Dorsolateral prefrontal cortex (tissue), 120 donors: ENCODE measurements at regions of chr3 and their contacts with region 1.

Region 1: GRCh38 chr3:170811928-170812591 is 57.9 kb downstream of the RPL22L1 start:
- DNase-seq: peak; percentile 32 to 84 (median 54)
- H3K4me3 ChIP-seq: no peak overlapping the region
- H3K27ac ChIP-seq: peak overlapping the region in 38 of 59 donors; percentile 1 to 71 (median 48)
- H3K27me3 ChIP-seq: no peaks in the 10 kb centered on the region
- CTCF ChIP-seq: peak; percentile 85 to 98 (median 94)

Region 2: GRCh38 chr3:170317954-170318353 is 494.1 kb before region 1 on chr3:
- intact Hi-C with region 1: loop called in 1 of 2 experiments (anchors 10 kb)
- DNase-seq: no peak
- H3K4me3 ChIP-seq: no peak overlapping the region
- H3K27ac ChIP-seq: no peak overlapping the region
- H3K27me3 ChIP-seq: no peaks in the 10 kb centered on the region
- CTCF ChIP-seq: no peak

Region 3: DNA sequence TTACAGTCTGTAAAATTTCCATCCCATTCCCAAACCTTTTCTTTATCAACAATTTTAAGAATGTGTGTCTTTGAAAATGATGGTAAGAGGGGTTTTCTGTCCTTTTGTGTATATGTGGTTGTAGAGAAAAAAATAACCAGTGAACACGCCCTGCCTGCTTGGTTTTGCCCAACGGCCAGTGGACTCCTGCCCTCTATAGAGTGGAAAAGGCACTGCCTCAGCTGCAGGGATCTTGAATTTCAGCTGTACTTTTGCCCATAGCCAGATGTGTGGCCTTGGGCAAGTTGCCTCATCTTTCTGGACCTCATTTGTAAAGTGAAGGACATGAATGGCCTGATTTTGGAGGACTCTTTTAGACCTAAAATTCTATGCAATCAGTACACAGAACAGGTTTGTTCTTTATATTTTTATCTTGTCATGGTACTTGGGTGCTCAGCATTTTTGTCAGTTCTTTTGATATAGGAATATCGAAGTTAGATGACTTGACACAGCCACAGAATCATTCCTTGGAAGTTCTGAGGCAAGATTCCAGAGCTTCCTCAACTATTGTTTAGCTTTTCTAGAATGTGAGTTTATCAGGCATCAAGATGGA is 312.4 kb before region 1 on chr3:
- intact Hi-C with region 1: loop called in 1 of 2 experiments (anchors 5 kb)
- DNase-seq: peak in 4 of 10 donors; percentile 51 to 72 (median 64)
- H3K4me3 ChIP-seq: no peak overlapping the region
- H3K27ac ChIP-seq: peak overlapping the region in 51 of 59 donors; percentile 2 to 100 (median 52)
- H3K27me3 ChIP-seq: no peaks in the 10 kb centered on the region
- CTCF ChIP-seq: peak in 55 of 56 donors; percentile 20 to 80 (median 58)

Region 4: GRCh38 chr3:170553788-170554757 is 258.0 kb before region 1 on chr3:
- intact Hi-C with region 1: loop called in 1 of 2 experiments (anchors 10 kb)
- DNase-seq: no peak
- H3K4me3 ChIP-seq: no peak overlapping the region
- H3K27ac ChIP-seq: peak overlapping the region in 10 of 59 donors; percentile 11 to 68 (median 22)
- H3K27me3 ChIP-seq: no peaks in the 10 kb centered on the region
- CTCF ChIP-seq: peak in 36 of 56 donors; percentile 8 to 63 (median 33)

Region 5: GRCh38 chr3:170726976-170727661 is 84.9 kb before region 1 on chr3:
- intact Hi-C with region 1: loop called in 1 of 2 experiments (anchors 5 kb)
- DNase-seq: no peak
- H3K4me3 ChIP-seq: no peak overlapping the region
- H3K27ac ChIP-seq: peak overlapping the region in 11 of 59 donors; percentile 3 to 55 (median 25)
- H3K27me3 ChIP-seq: no peaks in the 10 kb centered on the region
- CTCF ChIP-seq: no peak

Region 6: GRCh38 chr3:170801597-170801996 is 10.5 kb before region 1 on chr3:
- intact Hi-C with region 1: no loop called
- DNase-seq: no peak
- H3K4me3 ChIP-seq: no peak overlapping the region
- H3K27ac ChIP-seq: no peak overlapping the region
- H3K27me3 ChIP-seq: no peaks in the 10 kb centered on the region
- CTCF ChIP-seq: no peak